IMR-90 (cell line): ENCODE measurements at regions of chr7 and their contacts with region 1.

Region 1: GRCh38 chr7:23604296-23604640 is 7.1 kb downstream of the CCDC126 start:
- DNase-seq: peak; percentile 10
- ATAC-seq: no peak
- H3K4me3 ChIP-seq: no peak overlapping the region
- H3K27ac ChIP-seq: no peak overlapping the region
- H3K4me1 ChIP-seq: peaks cover 3% of the 10 kb centered on the region; the same call in 1 of the 2 replicates
- H3K27me3 ChIP-seq: no peaks in the 10 kb centered on the region
- CTCF ChIP-seq: no peak
- POLR2A ChIP-seq: no peak
- RAD21 ChIP-seq: no peak

Region 2: DNA sequence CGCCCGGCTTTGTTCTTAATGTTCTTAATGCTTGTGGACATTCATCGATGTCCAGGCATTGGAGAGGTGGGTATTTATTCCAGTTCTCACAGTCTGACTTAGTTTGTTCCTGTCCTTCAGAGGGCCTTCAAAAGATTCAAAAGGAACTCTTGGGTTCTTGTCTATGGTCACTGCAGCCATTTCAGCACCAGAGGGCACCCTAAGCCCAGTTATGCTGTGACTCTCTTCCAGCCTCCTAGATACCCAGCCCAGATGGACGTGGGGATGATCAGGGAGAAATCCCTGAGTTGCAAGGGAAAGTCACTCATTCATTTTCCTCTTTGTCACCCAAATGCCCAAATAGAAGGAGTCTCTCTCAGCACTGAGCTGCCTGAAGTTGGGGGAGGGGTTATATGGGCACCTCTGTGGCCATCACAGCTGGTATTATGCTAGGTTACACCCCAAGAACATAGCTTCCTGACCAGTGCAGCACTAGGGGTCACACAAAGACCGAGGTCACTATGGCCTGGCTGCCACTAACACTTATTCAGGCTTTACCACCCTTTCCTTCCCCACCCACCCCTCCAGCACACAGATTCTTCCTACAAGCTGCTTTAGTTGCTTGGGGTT is 33.6 kb before region 1 on chr7:
- CTCF ChIA-PET with region 1: no interaction called
- POLR2A ChIA-PET with region 1: interaction called, 11 read pairs
- dilution Hi-C with region 1: no loop called
- in situ Hi-C with region 1: no loop called
- intact Hi-C with region 1: no loop called
- DNase-seq: peak; percentile 76
- ATAC-seq: peak; percentile 100
- H3K4me3 ChIP-seq: no peak overlapping the region
- H3K27ac ChIP-seq: no peak overlapping the region
- H3K4me1 ChIP-seq: no peaks in the 10 kb centered on the region
- H3K27me3 ChIP-seq: no peaks in the 10 kb centered on the region
- CTCF ChIP-seq: peak; percentile 96
- POLR2A ChIP-seq: peak; percentile 48
- RAD21 ChIP-seq: peak; percentile 98